ENCODE measurements at regions of chr14 and their contacts with region 1.

Region 1: GRCh38 chr14:50773632-50774541 is 57.1 kb downstream of the NIN start:
- DNase-seq: no peak
- ATAC-seq: peak; percentile 67; the same call in 2 of the 3 replicates
- H3K4me3 ChIP-seq: no peak overlapping the region
- H3K27ac ChIP-seq: no peak overlapping the region
- H3K4me1 ChIP-seq: no peaks in the 10 kb centered on the region; the same call in 1 of the 2 replicates
- H3K27me3 ChIP-seq: no peaks in the 10 kb centered on the region
- CTCF ChIP-seq: peak; percentile 63 to 78 (median 76)
- EP300 ChIP-seq: no peak
- POLR2A ChIP-seq: no peak
- RAD21 ChIP-seq: peak; percentile 79

Region 2: GRCh38 chr14:50607181-50607580 is 166.7 kb before region 1 on chr14:
- CTCF ChIA-PET with region 1: interaction called, 120 read pairs
- POLR2A ChIA-PET with region 1: no interaction called
- RAD21 ChIA-PET with region 1: interaction called, 57 read pairs
- SMC1A ChIA-PET with region 1: interaction called, 53 read pairs
- in situ Hi-C with region 1: loop called (anchors 5 kb)
- intact Hi-C with region 1: no loop called
- DNase-seq: no peak
- ATAC-seq: peak; percentile 61
- H3K4me3 ChIP-seq: no peak overlapping the region
- H3K27ac ChIP-seq: no peak overlapping the region
- H3K4me1 ChIP-seq: no peaks in the 10 kb centered on the region
- H3K27me3 ChIP-seq: no peaks in the 10 kb centered on the region; a peak in 1 of 4 replicates
- CTCF ChIP-seq: no peak
- EP300 ChIP-seq: no peak
- POLR2A ChIP-seq: no peak
- RAD21 ChIP-seq: no peak

Region 3: GRCh38 chr14:50677527-50678063 is 96.3 kb before region 1 on chr14:
- CTCF ChIA-PET with region 1: interaction called, 9 read pairs
- POLR2A ChIA-PET with region 1: interaction called, 3 read pairs
- RAD21 ChIA-PET with region 1: interaction called, 7 read pairs
- SMC1A ChIA-PET with region 1: interaction called, 12 read pairs
- in situ Hi-C with region 1: no loop called
- intact Hi-C with region 1: no loop called
- DNase-seq: peak; percentile 61
- ATAC-seq: peak; percentile 92
- H3K4me3 ChIP-seq: peak overlapping the region; percentile 35; the same call in 1 of the 2 replicates
- H3K27ac ChIP-seq: peak overlapping the region; percentile 61
- H3K4me1 ChIP-seq: peaks cover 20% of the 10 kb centered on the region
- H3K27me3 ChIP-seq: no peaks in the 10 kb centered on the region
- CTCF ChIP-seq: no peak
- EP300 ChIP-seq: peak; percentile 46 to 81; a peak in 2 of 4 replicates
- POLR2A ChIP-seq: no peak
- RAD21 ChIP-seq: no peak

Region 4: GRCh38 chr14:50736932-50737419 is 36.9 kb before region 1 on chr14:
- CTCF ChIA-PET with region 1: interaction called, 41 read pairs
- POLR2A ChIA-PET with region 1: interaction called, 3 read pairs
- RAD21 ChIA-PET with region 1: interaction called, 14 read pairs
- SMC1A ChIA-PET with region 1: interaction called, 22 read pairs
- in situ Hi-C with region 1: no loop called
- intact Hi-C with region 1: no loop called
- DNase-seq: peak; percentile 79
- ATAC-seq: peak; percentile 89
- H3K4me3 ChIP-seq: no peak overlapping the region
- H3K27ac ChIP-seq: peak overlapping the region; percentile 62
- H3K4me1 ChIP-seq: peaks cover 35% of the 10 kb centered on the region
- H3K27me3 ChIP-seq: no peaks in the 10 kb centered on the region
- CTCF ChIP-seq: no peak
- EP300 ChIP-seq: peak; percentile 66 to 78; a peak in 3 of 4 replicates
- POLR2A ChIP-seq: peak; percentile 46
- RAD21 ChIP-seq: 0 out of 2 replicates have a peak, but pooled peaks have one; percentile 11

Region 5: GRCh38 chr14:50762001-50762930 is 11.6 kb before region 1 on chr14:
- CTCF ChIA-PET with region 1: interaction called, 140 read pairs
- POLR2A ChIA-PET with region 1: interaction called, 4 read pairs
- RAD21 ChIA-PET with region 1: interaction called, 17 read pairs
- SMC1A ChIA-PET with region 1: interaction called, 87 read pairs
- in situ Hi-C with region 1: no loop called
- intact Hi-C with region 1: no loop called
- DNase-seq: no peak
- ATAC-seq: peak; percentile 88
- H3K4me3 ChIP-seq: no peak overlapping the region
- H3K27ac ChIP-seq: peak overlapping the region; percentile 65
- H3K4me1 ChIP-seq: peaks cover 15% of the 10 kb centered on the region; the same call in 1 of the 2 replicates
- H3K27me3 ChIP-seq: no peaks in the 10 kb centered on the region
- CTCF ChIP-seq: no peak
- EP300 ChIP-seq: peak; percentile 12 to 22; a peak in 1 of 4 replicates
- POLR2A ChIP-seq: no peak
- RAD21 ChIP-seq: no peak

Region 6: DNA sequence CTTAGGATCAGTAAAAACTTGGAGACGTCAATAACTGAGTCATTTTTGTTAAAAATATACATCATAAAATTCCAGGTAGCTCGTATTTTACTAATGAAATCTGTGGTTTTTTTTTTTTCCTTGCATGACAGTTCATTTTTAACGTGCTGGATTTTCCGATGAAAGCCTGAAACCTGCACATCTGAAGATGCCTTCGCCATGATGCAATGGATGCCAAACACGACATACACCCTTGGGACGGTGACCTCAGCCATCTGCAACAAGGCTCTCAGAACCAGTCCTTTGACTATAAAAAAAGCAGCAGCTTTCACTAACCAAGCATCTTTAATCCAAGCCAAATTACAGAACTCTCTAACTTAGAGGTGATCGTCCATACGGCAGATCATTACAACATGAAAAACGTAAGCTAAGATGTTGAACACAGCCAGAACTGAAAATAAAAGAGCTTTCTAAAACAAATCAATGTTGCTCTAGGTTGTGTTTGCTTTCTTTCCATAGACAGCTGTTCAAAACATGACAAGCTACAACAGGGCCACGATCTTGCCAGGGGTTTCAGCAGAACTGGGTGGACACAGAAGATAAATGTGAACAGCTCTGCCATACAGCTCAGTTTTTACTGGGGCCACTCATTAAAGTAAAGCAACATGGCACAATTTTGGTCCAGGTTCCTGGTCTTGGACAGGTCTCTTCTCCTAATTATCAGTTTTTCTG is 49.3 kb after region 1 on chr14:
- CTCF ChIA-PET with region 1: interaction called, 38 read pairs
- POLR2A ChIA-PET with region 1: no interaction called
- RAD21 ChIA-PET with region 1: interaction called, 21 read pairs
- SMC1A ChIA-PET with region 1: interaction called, 12 read pairs
- in situ Hi-C with region 1: no loop called
- intact Hi-C with region 1: no loop called
- DNase-seq: peak; percentile 39
- ATAC-seq: peak; percentile 38
- H3K4me3 ChIP-seq: peak overlapping the region; percentile 74
- H3K27ac ChIP-seq: peak overlapping the region; percentile 88
- H3K4me1 ChIP-seq: peaks cover 37% of the 10 kb centered on the region
- H3K27me3 ChIP-seq: no peaks in the 10 kb centered on the region
- CTCF ChIP-seq: no peak
- EP300 ChIP-seq: no peak
- POLR2A ChIP-seq: no peak; the same call in 1 of the 2 replicates
- RAD21 ChIP-seq: no peak

Region 7: DNA sequence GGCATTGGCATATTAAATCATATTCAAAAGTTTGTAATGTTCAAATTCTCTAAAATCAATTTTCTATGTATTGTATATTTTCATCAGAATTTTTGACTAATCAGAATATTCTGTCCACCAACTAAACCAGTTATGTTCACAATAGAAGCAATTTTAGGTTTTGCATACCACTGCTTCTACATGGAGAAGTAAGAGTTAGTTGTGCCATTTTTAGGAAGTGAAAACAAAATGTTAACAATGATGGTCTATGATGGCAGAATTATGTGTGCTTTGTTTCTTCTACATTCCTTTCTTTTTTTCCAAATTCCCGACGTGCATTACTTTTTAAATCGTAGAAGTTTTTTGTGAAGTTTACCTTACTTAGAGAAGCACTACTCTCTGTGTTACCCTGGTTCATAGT is 127.5 kb after region 1 on chr14:
- CTCF ChIA-PET with region 1: no interaction called
- POLR2A ChIA-PET with region 1: no interaction called
- RAD21 ChIA-PET with region 1: no interaction called
- SMC1A ChIA-PET with region 1: no interaction called
- in situ Hi-C with region 1: no loop called
- intact Hi-C with region 1: no loop called
- DNase-seq: no peak
- ATAC-seq: peak; percentile 55; the same call in 2 of the 3 replicates
- H3K4me3 ChIP-seq: no peak overlapping the region
- H3K27ac ChIP-seq: no peak overlapping the region
- H3K4me1 ChIP-seq: no peaks in the 10 kb centered on the region
- H3K27me3 ChIP-seq: peaks cover 0 to 1% of the 10 kb centered on the region in 2 experiments; a peak in 1 of 4 replicates
- CTCF ChIP-seq: no peak
- EP300 ChIP-seq: 0 out of 4 replicates have a peak, but pooled peaks of 1 of the 2 experiments have one; percentile 28
- POLR2A ChIP-seq: no peak
- RAD21 ChIP-seq: no peak

Measured in GM12878 (cell line).